SK-N-SH (cell line): ENCODE measurements at regions of chrX and their contacts with region 1.

Region 1: GRCh38 chrX:41137589-41137988 is 52.3 kb downstream of the USP9X start:
- DNase-seq: no peak
- H3K4me3 ChIP-seq: no peak overlapping the region
- H3K27ac ChIP-seq: no peak overlapping the region
- H3K4me1 ChIP-seq: no peaks in the 10 kb centered on the region
- H3K27me3 ChIP-seq: no peaks in the 10 kb centered on the region
- CTCF ChIP-seq: peak; percentile 70
- EP300 ChIP-seq: no peak
- RAD21 ChIP-seq: peak; percentile 22; the same call in 1 of the 2 replicates

Region 2: GRCh38 chrX:41022579-41022978 is 115.0 kb before region 1 on chrX:
- CTCF ChIA-PET with region 1: no interaction called
- POLR2A ChIA-PET with region 1: no interaction called
- DNase-seq: no peak
- H3K4me3 ChIP-seq: no peak overlapping the region
- H3K27ac ChIP-seq: no peak overlapping the region
- H3K4me1 ChIP-seq: no peaks in the 10 kb centered on the region
- H3K27me3 ChIP-seq: peaks cover 5% of the 10 kb centered on the region; the same call in 1 of the 2 replicates
- CTCF ChIP-seq: no peak
- EP300 ChIP-seq: no peak
- RAD21 ChIP-seq: no peak

Region 3: GRCh38 chrX:41148553-41148952 is 11.0 kb after region 1 on chrX:
- CTCF ChIA-PET with region 1: interaction called, 10 read pairs
- POLR2A ChIA-PET with region 1: no interaction called
- DNase-seq: no peak
- H3K4me3 ChIP-seq: no peak overlapping the region
- H3K27ac ChIP-seq: peak overlapping the region in 1 of 2 experiments; percentile 78; a peak in 3 of 4 replicates
- H3K4me1 ChIP-seq: peaks cover 0 to 24% of the 10 kb centered on the region in 2 experiments; a peak in 1 of 4 replicates
- H3K27me3 ChIP-seq: no peaks in the 10 kb centered on the region
- CTCF ChIP-seq: no peak
- EP300 ChIP-seq: no peak
- RAD21 ChIP-seq: no peak

Region 4: DNA sequence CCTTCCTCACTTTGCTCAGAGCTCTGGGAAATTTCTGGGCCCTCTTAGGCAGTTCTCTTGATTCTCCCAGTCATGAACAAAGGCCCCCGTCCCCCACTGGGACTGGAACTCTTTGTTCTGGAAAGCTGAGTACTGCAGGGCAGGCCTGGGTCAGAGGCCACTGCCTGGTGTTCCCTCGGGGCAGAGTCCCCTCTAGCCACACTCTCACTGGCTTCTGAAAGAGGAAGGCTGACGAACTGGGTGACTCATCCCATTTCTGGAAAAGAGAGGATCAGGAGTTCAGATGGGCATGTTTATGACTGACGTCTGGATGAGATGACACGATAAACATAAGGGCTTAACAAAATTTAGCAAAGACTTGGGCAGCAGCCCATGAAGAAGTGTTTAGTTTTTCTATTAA is 244.1 kb after region 1 on chrX:
- CTCF ChIA-PET with region 1: no interaction called
- POLR2A ChIA-PET with region 1: no interaction called
- DNase-seq: no peak
- H3K4me3 ChIP-seq: no peak overlapping the region
- H3K27ac ChIP-seq: peak overlapping the region in 1 of 2 experiments; percentile 35; a peak in 1 of 4 replicates
- H3K4me1 ChIP-seq: no peaks in the 10 kb centered on the region
- H3K27me3 ChIP-seq: no peaks in the 10 kb centered on the region
- CTCF ChIP-seq: no peak
- EP300 ChIP-seq: peak in 1 of 2 experiments; percentile 28; a peak in 1 of 4 replicates
- RAD21 ChIP-seq: no peak